K562 (cell line): ENCODE measurements at regions of chr10 and their contacts with region 1.

Region 1: GRCh38 chr10:60282771-60283353 is 106.8 kb downstream of the ANK3 start:
- DNase-seq: peak in 1 of 4 experiments; percentile 58
- ATAC-seq: peak; percentile 70
- H3K4me3 ChIP-seq: no peak overlapping the region
- H3K27ac ChIP-seq: peak overlapping the region; percentile 66
- H3K4me1 ChIP-seq: peaks cover 0 to 38% of the 10 kb centered on the region in 2 experiments; a peak in 3 of 5 replicates
- H3K27me3 ChIP-seq: no peaks in the 10 kb centered on the region
- CTCF ChIP-seq: no peak; a peak in 1 of 6 replicates
- EP300 ChIP-seq: peak; percentile 52; the same call in 1 of the 2 replicates
- POLR2A ChIP-seq: no peak
- RAD21 ChIP-seq: no peak

Region 2: GRCh38 chr10:60293581-60294175 is 10.8 kb after region 1 on chr10:
- CTCF ChIA-PET with region 1: no interaction called
- POLR2A ChIA-PET with region 1: interaction called, 20 read pairs
- in situ Hi-C with region 1: no loop called
- intact Hi-C with region 1: loop called (anchors 1 kb)
- DNase-seq: no peak
- ATAC-seq: no peak
- H3K4me3 ChIP-seq: no peak overlapping the region
- H3K27ac ChIP-seq: no peak overlapping the region
- H3K4me1 ChIP-seq: peaks cover 0 to 40% of the 10 kb centered on the region in 2 experiments; a peak in 4 of 5 replicates
- H3K27me3 ChIP-seq: no peaks in the 10 kb centered on the region
- CTCF ChIP-seq: no peak
- EP300 ChIP-seq: no peak
- POLR2A ChIP-seq: no peak
- RAD21 ChIP-seq: no peak

Region 3: DNA sequence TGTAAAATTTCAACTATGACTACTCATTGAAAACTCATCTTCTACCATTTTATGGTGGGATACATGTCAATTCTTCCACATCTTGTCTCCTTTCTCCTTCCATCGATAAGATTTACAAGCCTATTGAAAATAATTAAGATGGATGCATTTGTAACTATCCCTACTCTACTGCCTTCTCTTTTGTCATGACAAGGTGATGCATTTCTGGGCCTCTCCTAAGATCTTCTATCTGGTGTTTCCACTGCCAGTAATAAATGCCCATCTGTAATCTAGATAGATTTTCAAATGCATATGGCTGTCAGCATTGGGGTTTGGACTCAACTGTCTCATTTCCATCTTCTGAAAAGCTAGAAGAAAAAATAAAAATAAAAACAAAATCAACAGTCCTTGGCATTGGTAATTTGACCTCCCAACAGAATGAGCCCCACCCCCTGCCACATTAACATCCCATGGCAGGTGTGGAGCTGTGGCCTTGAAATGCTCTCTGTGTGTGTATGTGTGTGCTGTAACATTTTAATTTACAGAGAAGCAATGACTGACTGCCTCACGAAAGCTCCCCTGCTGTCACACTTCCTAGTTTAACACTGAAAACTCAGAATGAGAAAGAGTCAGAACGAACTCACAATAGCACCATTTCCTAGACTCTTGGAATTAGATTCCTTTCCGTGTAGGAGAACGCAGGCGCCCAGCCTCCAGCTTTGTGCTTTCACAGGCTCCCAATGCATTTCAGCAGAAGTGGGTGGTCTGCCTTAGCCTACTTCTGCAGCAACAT is 587.0 kb after region 1 on chr10:
- CTCF ChIA-PET with region 1: no interaction called
- POLR2A ChIA-PET with region 1: no interaction called
- in situ Hi-C with region 1: no loop called
- intact Hi-C with region 1: no loop called
- DNase-seq: no peak
- ATAC-seq: no peak
- H3K4me3 ChIP-seq: no peak overlapping the region
- H3K27ac ChIP-seq: no peak overlapping the region
- H3K4me1 ChIP-seq: no peaks in the 10 kb centered on the region
- H3K27me3 ChIP-seq: no peaks in the 10 kb centered on the region
- CTCF ChIP-seq: no peak
- EP300 ChIP-seq: no peak
- POLR2A ChIP-seq: no peak
- RAD21 ChIP-seq: no peak